ENCODE measurements at regions of chr7 and their contacts with region 1.

Region 1: GRCh38 chr7:111561885-111562732 is at the start of gene IMMP2L:
- DNase-seq: peak; percentile 90 to 95
- ATAC-seq: peak; percentile 97 to 98 (median 97)
- H3K4me3 ChIP-seq: peak within 1 kb of the TSS; percentile 93
- H3K27ac ChIP-seq: peak within 1 kb of the TSS; percentile 96
- H3K4me1 ChIP-seq: peaks cover 5% of the 10 kb centered on the region
- H3K27me3 ChIP-seq: no peaks in the 10 kb centered on the region
- CTCF ChIP-seq: peak; percentile 38
- total RNA-seq, gene IMMP2L: 19.2 to 43.0 (median 30.2) TPM

Region 2: GRCh38 chr7:111380945-111381344 is 181.2 kb before region 1 on chr7:
- intact Hi-C with region 1: no loop called
- DNase-seq: no peak
- ATAC-seq: no peak
- H3K4me3 ChIP-seq: no peak overlapping the region
- H3K27ac ChIP-seq: no peak overlapping the region
- H3K4me1 ChIP-seq: no peaks in the 10 kb centered on the region
- H3K27me3 ChIP-seq: no peaks in the 10 kb centered on the region
- CTCF ChIP-seq: no peak

Region 3: GRCh38 chr7:111735661-111736551 is 173.8 kb after region 1 on chr7:
- intact Hi-C with region 1: loop called in 1 of 2 experiments (anchors 2 kb)
- DNase-seq: no peak
- ATAC-seq: peak; percentile 86 to 95 (median 91)
- H3K4me3 ChIP-seq: no peak overlapping the region
- H3K27ac ChIP-seq: peak overlapping the region; percentile 4
- H3K4me1 ChIP-seq: peaks cover 7% of the 10 kb centered on the region
- H3K27me3 ChIP-seq: no peaks in the 10 kb centered on the region
- CTCF ChIP-seq: peak; percentile 87

Region 4: DNA sequence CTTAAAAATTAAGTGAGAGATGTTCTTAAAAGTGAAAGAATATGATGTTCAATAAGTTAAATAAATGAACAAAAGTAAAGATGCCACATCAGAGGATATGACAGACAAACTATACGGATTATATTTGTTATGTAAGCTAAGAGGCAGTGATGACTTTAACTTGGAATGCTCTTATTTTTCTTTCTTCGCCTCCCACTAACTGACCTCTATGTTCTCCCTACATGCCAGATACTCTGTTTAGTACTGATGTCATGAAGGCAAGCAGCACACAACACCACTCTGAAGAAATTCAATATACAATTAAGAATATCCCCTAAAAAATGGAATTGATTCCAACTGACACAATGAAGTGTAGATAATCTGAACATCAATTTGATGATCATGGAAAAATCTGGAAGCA is 420.7 kb after region 1 on chr7:
- intact Hi-C with region 1: no loop called
- DNase-seq: no peak
- ATAC-seq: no peak
- H3K4me3 ChIP-seq: no peak overlapping the region
- H3K27ac ChIP-seq: no peak overlapping the region
- H3K4me1 ChIP-seq: no peaks in the 10 kb centered on the region
- H3K27me3 ChIP-seq: no peaks in the 10 kb centered on the region
- CTCF ChIP-seq: no peak

Measured in psoas muscle (tissue), 8 donors.